Tibial artery (tissue), 4 donors: ENCODE measurements at regions of chr22 and their contacts with region 1.

Region 1: DNA sequence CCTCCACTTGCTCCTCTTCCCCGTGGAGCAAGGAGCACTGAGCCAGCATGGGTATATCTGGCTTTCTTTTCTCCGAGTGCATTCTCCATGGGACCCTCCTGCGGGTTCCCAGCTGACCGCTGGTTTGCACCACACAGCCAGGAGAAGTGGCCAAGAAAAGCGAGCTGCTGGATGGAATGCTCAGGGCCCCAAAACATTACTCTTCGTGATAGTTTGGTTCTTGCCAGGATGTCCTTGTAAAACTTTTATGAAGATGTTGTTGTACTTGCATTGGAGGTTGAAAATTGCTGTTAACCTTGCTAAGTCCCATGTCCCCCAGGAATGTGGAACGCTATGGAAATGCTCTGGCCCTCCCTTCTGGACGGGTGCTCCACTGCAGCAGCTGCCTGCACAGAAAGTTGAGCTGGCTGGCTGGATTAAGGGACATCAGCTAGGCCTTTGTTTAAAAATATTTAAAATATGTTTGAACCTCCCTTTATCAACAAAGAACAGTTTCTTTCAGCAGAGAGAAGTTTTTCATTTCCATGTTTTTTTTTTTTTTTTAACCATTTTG is 68.7 kb downstream of the ZNRF3 start:
- DNase-seq: peak in 1 of 2 donors; percentile 65
- H3K4me3 ChIP-seq: no peak overlapping the region
- H3K27ac ChIP-seq: peak overlapping the region; percentile 32 to 45
- H3K4me1 ChIP-seq: peaks cover 0 to 59% (median 20%) of the 10 kb centered on the region in 4 donors
- H3K27me3 ChIP-seq: no peaks in the 10 kb centered on the region
- CTCF ChIP-seq: peak; percentile 40 to 42

Region 2: GRCh38 chr22:28855355-28856094 is 96.5 kb before region 1 on chr22:
- intact Hi-C with region 1: loop called (anchors 5 kb)
- DNase-seq: peak in 1 of 2 donors; percentile 30
- H3K4me3 ChIP-seq: no peak overlapping the region
- H3K27ac ChIP-seq: no peak overlapping the region
- H3K4me1 ChIP-seq: peaks cover 0 to 3% (median 1%) of the 10 kb centered on the region in 4 donors
- H3K27me3 ChIP-seq: no peaks in the 10 kb centered on the region
- CTCF ChIP-seq: peak; percentile 90 to 97

Region 3: DNA sequence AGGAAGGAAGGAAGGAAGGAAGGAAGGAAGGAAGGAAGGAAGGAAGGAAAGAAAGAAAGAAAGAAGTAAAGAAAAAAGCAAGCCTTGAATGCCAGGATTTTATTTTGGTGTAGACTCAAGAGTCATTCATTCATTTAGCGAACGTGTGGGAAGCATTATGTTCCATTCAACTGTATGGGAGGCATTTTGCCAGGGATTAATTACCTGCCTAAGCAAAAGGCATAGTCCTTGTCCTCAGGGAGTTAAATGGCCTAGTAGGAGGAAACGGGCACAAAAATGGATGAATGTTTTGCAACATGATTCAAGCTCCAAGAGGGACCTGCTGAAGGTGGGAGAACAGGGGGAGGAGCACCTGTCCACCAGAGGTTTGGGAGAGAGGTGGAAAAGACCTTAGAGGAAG is 84.9 kb before region 1 on chr22:
- intact Hi-C with region 1: no loop called
- DNase-seq: no peak
- H3K4me3 ChIP-seq: no peak overlapping the region
- H3K27ac ChIP-seq: no peak overlapping the region
- H3K4me1 ChIP-seq: no peaks in the 10 kb centered on the region
- H3K27me3 ChIP-seq: no peaks in the 10 kb centered on the region
- CTCF ChIP-seq: no peak

Region 4: GRCh38 chr22:28882878-28883656 is 69.0 kb before region 1 on chr22 and contains the start of gene ZNRF3:
- intact Hi-C with region 1: loop called (anchors 10 kb)
- DNase-seq: peak; percentile 90 to 94
- H3K4me3 ChIP-seq: peak within 1 kb of the TSS; percentile 60 to 65
- H3K27ac ChIP-seq: peak within 1 kb of the TSS; percentile 63 to 73
- H3K4me1 ChIP-seq: peaks cover 0 to 31% (median 17%) of the 10 kb centered on the region in 4 donors
- H3K27me3 ChIP-seq: no peaks in the 10 kb centered on the region
- CTCF ChIP-seq: no peak

Region 5: DNA sequence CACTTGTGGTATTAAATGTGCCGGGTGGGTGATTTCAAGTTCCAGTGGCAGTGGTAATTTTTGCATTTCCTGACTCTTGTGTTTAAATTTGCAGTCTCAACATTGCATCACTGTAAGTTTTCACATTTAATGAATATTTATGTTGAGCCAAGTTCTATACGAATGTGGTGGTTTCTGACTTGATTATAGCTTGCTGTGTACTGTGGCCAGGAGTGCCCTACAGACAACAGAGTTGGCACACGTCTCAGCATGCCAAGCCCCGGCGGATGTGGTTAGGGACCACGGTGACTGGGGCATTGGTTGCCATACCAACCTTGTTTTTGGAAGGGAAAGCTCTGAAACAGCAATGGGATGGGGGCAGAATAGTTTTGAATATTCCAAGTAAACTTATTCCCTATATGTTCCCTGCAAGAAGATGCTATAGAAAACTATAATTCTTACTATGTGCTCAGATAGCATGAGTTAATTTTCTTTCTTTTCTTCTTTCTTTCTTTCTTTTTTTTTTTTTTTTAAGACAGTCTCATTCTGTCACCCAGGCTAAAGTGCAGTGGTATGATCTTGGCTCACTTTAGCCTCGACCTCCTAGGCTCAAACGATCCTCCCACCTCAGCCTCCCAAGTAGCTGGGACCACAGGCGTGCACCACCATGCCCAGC is 52.7 kb before region 1 on chr22:
- intact Hi-C with region 1: no loop called
- DNase-seq: peak in 1 of 2 donors; percentile 37
- H3K4me3 ChIP-seq: no peak overlapping the region
- H3K27ac ChIP-seq: peak overlapping the region in 1 of 2 donors; percentile 24
- H3K4me1 ChIP-seq: peaks cover 0 to 49% (median 26%) of the 10 kb centered on the region in 4 donors
- H3K27me3 ChIP-seq: no peaks in the 10 kb centered on the region
- CTCF ChIP-seq: no peak

Region 6: DNA sequence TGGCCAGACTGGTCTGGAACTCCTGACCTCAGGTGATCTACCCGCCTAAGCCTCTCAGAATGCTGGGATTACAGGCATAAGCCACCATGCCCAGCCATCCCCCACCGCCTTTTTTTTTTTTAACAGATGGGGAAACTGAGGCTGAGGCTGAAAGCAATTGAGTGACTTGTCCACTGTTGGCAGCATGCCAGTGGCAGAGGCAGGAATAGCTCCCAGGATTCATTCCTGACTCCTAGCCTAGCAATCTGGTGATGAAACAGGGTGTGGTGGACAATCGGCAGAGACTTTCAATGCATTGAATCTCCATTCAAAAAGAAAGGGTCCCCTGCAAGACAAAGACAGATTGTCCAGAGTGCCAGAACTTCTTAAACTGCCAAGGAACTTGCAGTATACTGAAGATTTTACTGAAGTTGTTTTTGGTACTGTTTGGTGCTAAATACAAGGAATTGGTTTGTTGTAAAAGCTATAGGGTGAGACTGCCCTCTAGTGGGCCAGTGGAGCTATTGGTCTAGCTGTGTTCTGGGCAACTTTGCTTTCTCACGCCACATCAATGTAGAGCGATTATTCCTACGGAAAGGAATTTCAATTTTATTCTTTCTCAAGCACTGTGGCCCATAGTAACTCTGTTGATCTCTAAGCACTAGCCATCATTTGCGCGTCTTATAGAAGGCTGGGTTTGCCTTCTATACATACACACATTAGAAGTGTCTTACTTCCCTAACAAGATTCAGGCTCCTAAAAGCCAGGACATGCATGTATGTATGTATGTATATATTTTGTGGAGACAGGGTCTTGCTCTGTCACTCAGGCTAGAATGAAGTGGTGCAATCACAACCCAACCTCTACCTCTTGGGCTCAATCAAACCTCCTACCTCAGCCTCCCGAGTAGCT is 88.6 kb after region 1 on chr22:
- intact Hi-C with region 1: loop called (anchors 10 kb)
- DNase-seq: peak in 1 of 2 donors; percentile 70
- H3K4me3 ChIP-seq: no peak overlapping the region
- H3K27ac ChIP-seq: no peak overlapping the region
- H3K4me1 ChIP-seq: peaks cover 0 to 28% (median 16%) of the 10 kb centered on the region in 4 donors
- H3K27me3 ChIP-seq: no peaks in the 10 kb centered on the region
- CTCF ChIP-seq: peak; percentile 96 to 97